HEK293T (cell line): ENCODE measurements at regions of chr16 and their contacts with region 1.

Region 1: DNA sequence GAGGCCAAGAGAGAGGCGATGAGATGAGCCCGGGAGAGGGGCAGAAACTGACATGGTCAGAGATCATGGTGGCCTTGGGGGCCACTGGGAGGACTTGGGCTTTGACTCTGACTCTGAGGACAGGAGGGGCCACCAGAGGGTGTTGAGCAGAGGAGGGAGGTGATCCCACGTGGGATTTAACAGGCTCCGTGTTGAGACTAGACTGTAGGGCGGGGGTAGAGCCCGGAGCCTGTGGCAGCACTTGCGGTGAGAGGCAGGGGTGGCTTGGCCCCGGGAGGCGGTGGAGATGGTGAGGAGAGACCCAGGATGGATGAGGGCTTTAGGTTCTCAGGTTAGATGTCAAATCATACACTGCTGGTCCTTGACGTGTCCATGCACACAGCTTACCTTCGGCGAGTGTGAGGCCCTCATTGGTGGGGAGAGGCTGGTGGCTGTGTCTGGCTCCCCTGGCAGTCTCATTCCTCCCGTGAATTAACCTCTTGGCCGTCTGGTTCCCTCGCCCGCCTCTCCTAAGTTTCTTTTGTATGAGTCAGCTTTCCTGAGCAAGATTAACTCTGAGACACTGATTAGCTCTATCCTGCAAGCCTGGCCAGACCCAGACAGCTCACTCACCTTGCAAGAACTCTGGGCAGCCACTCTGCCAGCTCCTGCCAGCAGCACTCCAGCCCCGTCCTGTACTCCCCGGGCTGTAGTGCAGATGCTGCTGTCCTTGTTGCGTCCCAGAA is 39.7 kb downstream of the VPS35L start:
- DNase-seq: no peak

Region 2: DNA sequence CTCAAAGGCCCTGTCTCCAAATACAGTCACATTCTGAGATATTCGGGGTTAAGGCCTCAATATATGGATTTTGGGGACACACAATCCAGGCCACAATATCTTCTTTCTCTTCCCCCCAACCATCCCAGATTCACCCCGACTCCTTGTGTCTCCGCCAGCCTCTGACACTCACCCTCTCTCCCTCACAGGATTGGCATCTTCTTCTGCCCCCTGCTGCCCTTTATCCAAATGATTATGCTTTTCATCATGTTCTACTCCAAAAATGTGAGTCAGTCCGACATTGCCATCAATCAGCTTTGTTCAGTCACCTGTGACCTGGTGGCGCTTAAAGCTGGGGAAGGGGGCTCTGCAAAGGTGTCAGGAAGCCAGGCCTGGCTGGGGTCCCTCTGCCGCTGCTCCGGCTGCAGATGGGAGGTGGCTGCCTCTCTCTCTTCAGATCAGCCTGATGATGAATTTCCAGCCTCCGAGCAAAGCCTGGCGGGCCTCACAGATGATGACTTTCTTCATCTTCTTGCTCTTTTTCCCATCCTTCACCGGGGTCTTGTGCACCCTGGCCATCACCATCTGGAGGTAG is 108.4 kb before region 1 on chr16:
- CTCF ChIA-PET with region 1: no interaction called
- POLR2A ChIA-PET with region 1: no interaction called
- DNase-seq: no peak

Region 3: GRCh38 chr16:19521471-19522396 is 73.5 kb before region 1 on chr16 and contains the start of gene GDE1:
- CTCF ChIA-PET with region 1: no interaction called
- POLR2A ChIA-PET with region 1: no interaction called
- DNase-seq: peak; percentile 89

Region 4: DNA sequence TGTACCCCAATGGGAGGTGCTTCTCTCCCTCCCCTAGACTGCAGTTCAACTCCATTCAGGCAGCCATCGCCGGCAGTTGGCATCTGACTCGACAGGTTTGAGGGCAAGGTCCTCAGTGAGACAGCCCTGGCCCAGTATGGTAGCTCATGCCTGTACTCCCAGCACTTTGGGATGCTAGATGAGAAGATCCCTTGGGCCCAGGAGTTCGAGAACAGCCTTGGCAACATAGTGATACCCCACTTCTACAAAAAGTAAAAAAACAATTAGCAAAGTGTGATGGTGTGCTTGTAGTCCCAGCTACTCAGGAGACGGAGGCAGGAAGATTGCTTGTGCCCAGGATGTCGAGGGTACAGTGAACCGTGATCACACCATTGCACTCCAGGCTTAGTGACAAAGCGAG is 27.6 kb before region 1 on chr16:
- CTCF ChIA-PET with region 1: no interaction called
- POLR2A ChIA-PET with region 1: no interaction called
- DNase-seq: no peak

Region 5: DNA sequence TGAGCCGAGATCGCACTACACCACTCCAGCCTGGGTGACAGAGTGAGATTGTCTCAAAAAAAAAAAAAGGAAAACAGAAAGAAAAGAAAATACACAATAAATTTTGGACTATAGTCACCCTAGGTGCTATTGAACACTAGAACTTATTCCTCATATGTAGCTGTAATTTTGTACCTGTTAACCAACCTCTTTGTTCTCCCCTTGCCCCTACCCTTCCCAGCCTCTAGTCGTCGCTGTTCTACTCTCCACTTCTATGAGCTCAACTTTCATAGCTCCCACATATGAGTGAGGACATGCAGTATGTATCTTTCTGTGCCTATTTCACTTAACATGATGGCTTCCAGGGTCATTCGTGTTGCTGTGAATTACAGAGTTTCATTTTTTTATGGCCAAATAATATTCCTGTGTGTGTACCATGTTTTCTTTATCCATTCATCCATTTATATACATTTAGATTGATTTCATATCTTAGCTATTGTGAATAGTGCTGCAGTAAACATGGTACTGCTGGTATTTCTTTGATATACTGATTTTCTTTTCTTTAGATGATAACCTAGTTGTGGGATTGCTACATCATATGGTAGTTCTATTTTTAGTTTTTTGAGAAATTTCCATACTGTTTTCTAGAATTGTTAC is 11.4 kb before region 1 on chr16:
- CTCF ChIA-PET with region 1: interaction called, 13 read pairs
- POLR2A ChIA-PET with region 1: no interaction called
- DNase-seq: peak; percentile 41

Region 6: DNA sequence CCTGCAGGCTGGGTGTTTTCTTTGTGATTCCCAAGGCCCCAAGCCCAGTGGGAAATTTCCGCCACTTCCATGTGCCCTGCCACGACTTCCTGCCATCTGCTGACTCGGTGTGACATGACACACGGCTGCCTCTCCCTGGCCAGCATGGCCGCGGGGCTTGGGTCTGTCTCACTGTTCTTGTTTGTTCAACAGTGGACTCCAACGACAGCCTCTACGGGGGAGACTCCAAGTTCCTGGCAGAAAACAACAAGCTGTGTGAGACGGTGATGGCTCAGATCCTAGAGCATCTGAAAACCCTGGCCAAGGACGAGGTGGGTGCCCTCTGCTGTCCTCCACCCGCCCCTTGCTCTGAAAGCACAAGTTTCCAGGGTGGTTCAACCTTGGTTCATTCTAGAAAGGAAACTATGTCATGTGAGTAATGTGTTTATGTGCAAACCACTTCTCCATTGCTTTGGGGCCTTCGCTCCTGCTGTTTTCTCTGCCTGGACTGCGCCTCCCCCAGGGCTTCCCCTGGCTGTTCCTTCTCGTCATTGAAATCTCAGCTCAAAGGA is 96.0 kb after region 1 on chr16:
- CTCF ChIA-PET with region 1: no interaction called
- POLR2A ChIA-PET with region 1: no interaction called
- DNase-seq: no peak